ENCODE measurements at regions of chr12 and their contacts with region 1.

Region 1: GRCh38 chr12:6851921-6852650 is at the start of gene USP5:
- DNase-seq: peak; percentile 98
- ATAC-seq: peak; percentile 86
- H3K4me3 ChIP-seq: peak within 1 kb of the TSS; percentile 79 to 95 (median 85)
- H3K27ac ChIP-seq: peak within 1 kb of the TSS; percentile 82
- H3K4me1 ChIP-seq: peaks cover 33% of the 10 kb centered on the region
- H3K27me3 ChIP-seq: no peaks in the 10 kb centered on the region
- CTCF ChIP-seq: 0 out of 2 replicates have a peak, but pooled peaks have one; percentile 7
- EP300 ChIP-seq: no peak
- POLR2A ChIP-seq: peak; percentile 70 to 90
- RAD21 ChIP-seq: peak; percentile 65
- total RNA-seq, gene USP5: 53.4 and 56.0 TPM in 2 replicates

Region 2: DNA sequence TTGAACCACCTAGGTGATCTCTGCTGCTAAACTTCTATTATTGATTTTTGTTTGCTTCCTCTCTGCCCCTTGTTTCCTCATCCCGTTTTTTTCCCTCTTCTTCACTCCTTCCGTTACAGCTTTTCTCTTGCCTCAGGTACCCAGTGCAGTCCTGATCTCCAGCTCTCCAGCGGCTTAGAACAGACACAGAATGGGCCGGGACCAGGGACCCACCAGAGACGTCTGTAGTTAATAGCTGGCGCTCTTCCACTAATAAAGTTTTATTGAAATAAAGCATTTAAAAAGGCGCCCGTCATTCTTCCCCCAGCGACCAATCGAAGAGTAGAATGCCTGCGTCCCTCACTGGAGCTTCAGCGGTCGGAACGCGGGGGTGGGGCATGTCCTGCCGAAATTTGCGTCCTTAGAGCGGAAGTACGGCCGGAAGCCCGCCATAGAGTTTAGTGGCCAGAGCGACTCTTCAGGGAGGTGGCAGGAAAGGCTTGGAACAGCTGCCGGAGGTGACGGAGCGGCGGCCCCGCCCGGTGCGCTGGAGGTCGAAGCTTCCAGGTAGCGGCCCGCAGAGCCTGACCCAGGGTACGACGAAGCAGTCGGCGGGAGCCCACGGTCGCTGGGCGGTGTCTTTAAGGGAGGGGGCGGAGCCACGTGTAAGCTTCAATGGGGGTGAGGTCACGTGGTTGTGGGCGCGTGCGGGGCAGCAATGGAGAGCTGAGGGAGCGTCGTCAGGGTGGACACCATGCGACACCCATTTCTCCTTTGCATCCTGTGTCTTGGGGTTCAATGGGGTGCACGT is 128.3 kb before region 1 on chr12 and contains the start of gene COPS7A:
- CTCF ChIA-PET with region 1: no interaction called
- POLR2A ChIA-PET with region 1: interaction called, 25 read pairs
- in situ Hi-C with region 1: no loop called
- intact Hi-C with region 1: no loop called
- DNase-seq: peak; percentile 97
- ATAC-seq: peak; percentile 97
- H3K4me3 ChIP-seq: peak within 1 kb of the TSS; percentile 65 to 93 (median 74)
- H3K27ac ChIP-seq: peak within 1 kb of the TSS; percentile 82
- H3K4me1 ChIP-seq: peaks cover 31% of the 10 kb centered on the region
- H3K27me3 ChIP-seq: no peaks in the 10 kb centered on the region
- CTCF ChIP-seq: peak; percentile 66
- EP300 ChIP-seq: peak in 1 of 2 experiments; percentile 58; a peak in 1 of 4 replicates
- POLR2A ChIP-seq: peak; percentile 68 to 85
- RAD21 ChIP-seq: peak; percentile 36; the same call in 1 of the 2 replicates
- total RNA-seq, gene COPS7A: 38.0 and 40.0 TPM in 2 replicates

Region 3: DNA sequence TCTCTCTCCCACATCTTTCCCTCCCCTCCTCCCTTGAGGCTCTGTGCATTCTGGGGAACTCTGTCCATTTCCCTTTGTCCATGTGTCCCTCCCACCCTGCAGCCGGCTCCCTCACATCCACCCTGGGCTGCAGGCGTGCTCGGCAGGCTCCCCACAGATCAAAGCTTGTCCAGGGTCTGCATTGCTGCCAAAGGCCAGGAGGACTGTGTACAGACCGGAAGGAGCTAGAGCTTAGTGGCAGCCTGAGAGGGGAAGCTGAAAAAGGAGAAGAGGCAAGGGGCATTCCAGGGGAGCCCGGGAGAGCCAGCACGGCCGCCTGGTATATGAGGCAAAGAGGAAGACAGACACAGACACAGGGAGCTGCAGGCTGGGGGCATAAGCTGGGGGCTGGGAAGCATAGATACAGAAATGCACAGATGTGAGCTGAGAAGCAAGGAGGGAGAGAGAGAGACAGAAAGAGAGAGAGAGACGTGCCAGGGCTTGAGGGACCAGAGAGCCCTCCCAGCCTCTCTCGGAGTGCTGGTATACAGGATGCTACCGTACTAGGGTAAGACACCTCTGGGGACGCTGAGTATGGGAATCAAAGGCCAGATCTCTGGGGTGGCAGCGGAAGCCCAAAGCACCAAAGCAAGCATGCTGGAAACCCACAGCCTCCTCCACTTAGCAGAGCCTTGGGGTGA is 59.4 kb before region 1 on chr12:
- CTCF ChIA-PET with region 1: no interaction called
- POLR2A ChIA-PET with region 1: interaction called, 12 read pairs
- in situ Hi-C with region 1: no loop called
- intact Hi-C with region 1: no loop called
- DNase-seq: peak; percentile 87
- ATAC-seq: peak; percentile 97
- H3K4me3 ChIP-seq: peak overlapping the region in 2 of 3 experiments; percentile 27 to 58; a peak in 4 of 6 replicates
- H3K27ac ChIP-seq: peak overlapping the region; percentile 74
- H3K4me1 ChIP-seq: peaks cover 59% of the 10 kb centered on the region
- H3K27me3 ChIP-seq: no peaks in the 10 kb centered on the region; a peak in 1 of 5 replicates
- CTCF ChIP-seq: peak; percentile 31; the same call in 1 of the 2 replicates
- EP300 ChIP-seq: peak in 1 of 2 experiments; percentile 78; a peak in 2 of 4 replicates
- POLR2A ChIP-seq: peak in 1 of 2 experiments; percentile 59; a peak in 2 of 4 replicates
- RAD21 ChIP-seq: no peak

Region 4: GRCh38 chr12:6867413-6868210 is 15.5 kb after region 1 on chr12 and contains the start of gene TPI1:
- CTCF ChIA-PET with region 1: no interaction called
- POLR2A ChIA-PET with region 1: interaction called, 132 read pairs
- in situ Hi-C with region 1: no loop called
- intact Hi-C with region 1: loop called (anchors 2 kb)
- DNase-seq: peak; percentile 39
- ATAC-seq: peak; percentile 73
- H3K4me3 ChIP-seq: peak within 1 kb of the TSS; percentile 88 to 96 (median 92)
- H3K27ac ChIP-seq: peak within 1 kb of the TSS; percentile 87
- H3K4me1 ChIP-seq: peaks cover 45% of the 10 kb centered on the region
- H3K27me3 ChIP-seq: no peaks in the 10 kb centered on the region; a peak in 1 of 5 replicates
- CTCF ChIP-seq: peak; percentile 5; the same call in 1 of the 2 replicates
- EP300 ChIP-seq: no peak
- POLR2A ChIP-seq: peak in 1 of 2 experiments; percentile 98; a peak in 2 of 4 replicates
- RAD21 ChIP-seq: peak; percentile 59
- total RNA-seq, gene TPI1: 945 and 1,237 TPM in 2 replicates

Region 5: GRCh38 chr12:6890789-6891645 is 38.9 kb after region 1 on chr12:
- CTCF ChIA-PET with region 1: no interaction called
- POLR2A ChIA-PET with region 1: interaction called, 19 read pairs
- in situ Hi-C with region 1: no loop called
- intact Hi-C with region 1: no loop called
- DNase-seq: peak; percentile 88
- ATAC-seq: peak; percentile 96
- H3K4me3 ChIP-seq: peak overlapping the region; percentile 50 to 79 (median 65)
- H3K27ac ChIP-seq: peak overlapping the region; percentile 94
- H3K4me1 ChIP-seq: peaks cover 52% of the 10 kb centered on the region
- H3K27me3 ChIP-seq: no peaks in the 10 kb centered on the region; a peak in 1 of 5 replicates
- CTCF ChIP-seq: peak; percentile 87
- EP300 ChIP-seq: peak in 1 of 2 experiments; percentile 56; a peak in 3 of 4 replicates
- POLR2A ChIP-seq: peak; percentile 73 to 78
- RAD21 ChIP-seq: peak; percentile 99